HCT116 (cell line): ENCODE measurements at regions of chr7 and their contacts with region 1.

Region 1: GRCh38 chr7:12686894-12687717 is at the start of gene ARL4A:
- DNase-seq: peak; percentile 96
- ATAC-seq: peak; percentile 88
- H3K4me3 ChIP-seq: peak within 1 kb of the TSS; percentile 82
- H3K27ac ChIP-seq: peak within 1 kb of the TSS; percentile 94
- H3K4me1 ChIP-seq: peaks cover 6 to 16% of the 10 kb centered on the region in 2 experiments; a peak in 3 of 4 replicates
- H3K27me3 ChIP-seq: no peaks in the 10 kb centered on the region
- CTCF ChIP-seq: peak in 2 of 3 experiments; percentile 8 to 71; a peak in 3 of 6 replicates
- POLR2A ChIP-seq: peak; percentile 96
- RAD21 ChIP-seq: peak; percentile 94
- total RNA-seq, gene ARL4A: 44.6 TPM

Region 2: DNA sequence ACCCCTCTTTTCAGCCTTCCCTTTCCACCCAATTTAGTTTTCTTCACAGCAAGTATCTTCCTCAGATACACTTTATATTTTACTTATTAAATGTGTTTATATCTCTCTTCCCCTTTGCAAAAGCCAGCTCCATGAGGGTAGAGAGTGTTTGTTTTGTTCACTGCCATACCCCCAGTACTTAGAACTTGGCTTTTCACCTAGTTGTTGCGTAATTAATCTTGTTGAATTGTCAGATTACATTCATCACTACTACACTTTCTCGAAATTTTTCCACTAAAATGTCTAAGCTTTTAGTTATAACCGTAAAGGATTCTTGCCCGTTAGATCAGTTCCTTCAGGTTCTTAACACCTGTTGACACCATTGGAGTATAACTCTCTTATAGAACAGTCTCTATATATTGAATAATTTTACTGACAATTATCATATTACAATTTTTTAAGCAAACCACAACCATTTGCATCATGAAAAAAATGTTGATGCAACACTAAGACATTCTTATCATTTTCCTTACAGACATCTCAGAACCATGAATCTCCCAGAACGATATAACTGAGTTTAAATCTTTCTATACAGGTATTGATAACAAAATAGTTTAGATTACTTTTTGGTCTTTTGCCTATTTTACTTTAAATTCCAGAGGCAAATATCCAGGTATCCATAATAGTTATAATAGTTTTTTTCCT is 313.4 kb before region 1 on chr7:
- CTCF ChIA-PET with region 1: no interaction called
- POLR2A ChIA-PET with region 1: no interaction called
- RAD21 ChIA-PET with region 1: no interaction called
- intact Hi-C with region 1: no loop called
- DNase-seq: no peak
- ATAC-seq: no peak
- H3K4me3 ChIP-seq: no peak overlapping the region
- H3K27ac ChIP-seq: no peak overlapping the region
- H3K4me1 ChIP-seq: no peaks in the 10 kb centered on the region
- H3K27me3 ChIP-seq: no peaks in the 10 kb centered on the region
- CTCF ChIP-seq: no peak
- POLR2A ChIP-seq: no peak
- RAD21 ChIP-seq: no peak

Region 3: DNA sequence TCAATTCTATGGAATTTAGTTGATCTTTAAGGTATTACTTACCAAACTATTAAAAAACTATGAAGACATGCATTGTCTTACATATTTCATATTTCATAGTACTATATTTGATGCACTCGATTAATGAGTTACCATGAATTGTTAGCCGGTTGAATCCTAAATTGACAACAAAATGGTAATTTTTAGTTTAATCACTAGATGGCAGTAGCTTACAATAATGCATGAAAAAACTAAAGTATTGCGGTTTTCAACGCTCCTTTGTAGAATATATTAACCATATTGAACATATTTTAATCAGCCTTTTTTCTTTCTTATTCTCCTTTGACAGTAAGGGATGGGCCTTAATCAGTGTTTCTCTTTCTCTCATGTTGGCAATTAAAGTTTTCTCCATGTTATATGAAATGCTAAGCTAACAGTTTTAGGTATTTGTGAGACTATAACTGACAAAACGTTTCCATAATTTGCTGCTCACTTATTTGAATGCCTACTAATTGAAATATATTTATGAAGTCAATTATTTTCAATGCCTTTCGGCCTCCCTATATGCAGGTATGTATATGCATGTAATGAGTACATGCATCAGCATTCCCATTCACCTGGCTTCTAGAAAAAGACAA is 48.1 kb before region 1 on chr7:
- CTCF ChIA-PET with region 1: interaction called, 6 read pairs
- POLR2A ChIA-PET with region 1: no interaction called
- RAD21 ChIA-PET with region 1: no interaction called
- intact Hi-C with region 1: loop called (anchors 1 kb)
- DNase-seq: peak; percentile 36
- ATAC-seq: peak; percentile 70
- H3K4me3 ChIP-seq: no peak overlapping the region
- H3K27ac ChIP-seq: no peak overlapping the region
- H3K4me1 ChIP-seq: peaks cover 0 to 7% of the 10 kb centered on the region in 2 experiments; a peak in 2 of 4 replicates
- H3K27me3 ChIP-seq: no peaks in the 10 kb centered on the region
- CTCF ChIP-seq: peak; percentile 33 to 70 (median 66); a peak in 5 of 6 replicates
- POLR2A ChIP-seq: no peak
- RAD21 ChIP-seq: peak; percentile 81

Region 4: GRCh38 chr7:13017333-13017853 is 330.3 kb after region 1 on chr7:
- CTCF ChIA-PET with region 1: interaction called, 8 read pairs
- POLR2A ChIA-PET with region 1: interaction called, 7 read pairs
- RAD21 ChIA-PET with region 1: no interaction called
- intact Hi-C with region 1: loop called (anchors 1 kb)
- DNase-seq: peak; percentile 96
- ATAC-seq: peak; percentile 84
- H3K4me3 ChIP-seq: peak overlapping the region; percentile 30 to 62
- H3K27ac ChIP-seq: peak overlapping the region; percentile 93
- H3K4me1 ChIP-seq: peaks cover 24 to 62% of the 10 kb centered on the region in 2 experiments
- H3K27me3 ChIP-seq: no peaks in the 10 kb centered on the region
- CTCF ChIP-seq: no peak
- POLR2A ChIP-seq: no peak
- RAD21 ChIP-seq: peak; percentile 30; the same call in 1 of the 2 replicates

Region 5: GRCh38 chr7:13117103-13117502 is 430.0 kb after region 1 on chr7:
- CTCF ChIA-PET with region 1: interaction called, 28 read pairs
- POLR2A ChIA-PET with region 1: no interaction called
- RAD21 ChIA-PET with region 1: interaction called in 1 of 2 experiments, 6 read pairs
- intact Hi-C with region 1: loop called (anchors 1 kb)
- DNase-seq: peak; percentile 18
- ATAC-seq: peak; percentile 80
- H3K4me3 ChIP-seq: no peak overlapping the region
- H3K27ac ChIP-seq: no peak overlapping the region
- H3K4me1 ChIP-seq: peaks cover 0 to 11% of the 10 kb centered on the region in 2 experiments; a peak in 1 of 4 replicates
- H3K27me3 ChIP-seq: no peaks in the 10 kb centered on the region
- CTCF ChIP-seq: peak; percentile 59 to 72 (median 67); a peak in 5 of 6 replicates
- POLR2A ChIP-seq: no peak
- RAD21 ChIP-seq: peak; percentile 89

Region 6: GRCh38 chr7:13262929-13263530 is 575.9 kb after region 1 on chr7:
- CTCF ChIA-PET with region 1: interaction called, 7 read pairs
- POLR2A ChIA-PET with region 1: interaction called, 3 read pairs
- RAD21 ChIA-PET with region 1: no interaction called
- intact Hi-C with region 1: loop called (anchors 1 kb)
- DNase-seq: peak; percentile 26
- ATAC-seq: peak; percentile 71; the same call in 1 of the 2 replicates
- H3K4me3 ChIP-seq: no peak overlapping the region
- H3K27ac ChIP-seq: no peak overlapping the region
- H3K4me1 ChIP-seq: no peaks in the 10 kb centered on the region
- H3K27me3 ChIP-seq: no peaks in the 10 kb centered on the region
- CTCF ChIP-seq: peak; percentile 46 to 90 (median 71)
- POLR2A ChIP-seq: no peak
- RAD21 ChIP-seq: peak; percentile 91